A673 (cell line): ENCODE measurements at regions of chr2 and their contacts with region 1.

Region 1: DNA sequence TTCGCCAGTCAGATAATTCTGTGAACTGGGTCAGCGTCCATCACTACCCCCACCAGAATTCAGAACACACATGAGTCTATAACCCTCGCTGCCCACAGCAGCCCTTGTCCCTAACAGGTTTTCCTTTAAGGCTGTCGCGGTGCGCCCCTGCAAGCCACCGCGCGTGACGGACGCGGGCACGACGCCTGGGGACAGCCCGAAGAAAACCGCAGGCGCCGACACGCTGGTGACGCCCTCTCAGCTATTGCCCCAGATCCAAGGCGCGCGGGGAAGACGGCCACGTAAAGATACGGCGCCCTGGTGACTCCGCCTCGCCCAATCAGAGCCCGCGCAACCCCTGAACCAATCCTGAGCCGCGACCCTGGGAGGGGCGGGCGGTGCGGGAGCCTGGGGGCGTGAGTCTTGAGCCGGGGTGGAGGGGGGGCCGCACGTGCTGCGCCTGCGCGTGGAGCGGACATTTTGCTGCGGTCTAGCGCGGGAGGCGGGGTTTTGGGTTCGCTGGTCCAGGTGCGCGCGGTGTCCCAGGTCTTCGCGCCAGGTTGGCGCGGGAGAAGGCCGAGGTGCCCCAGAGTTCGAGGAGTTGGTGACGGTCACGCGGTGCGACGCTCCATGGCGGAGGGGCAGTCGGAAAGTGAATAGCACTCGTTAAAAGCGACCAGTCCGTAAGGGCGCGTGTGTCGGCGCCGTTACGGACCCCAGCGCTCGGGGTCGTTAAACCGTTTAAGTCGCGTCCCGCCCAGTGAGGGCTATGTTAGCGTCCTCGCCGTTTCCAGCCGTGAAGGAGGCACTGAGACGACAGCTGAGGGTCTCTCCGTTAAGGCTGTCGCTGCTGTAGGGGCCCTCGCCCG is 15.9 kb downstream of the NMUR1 start:
- DNase-seq: peak; percentile 99
- H3K4me3 ChIP-seq: peak overlapping the region; percentile 62
- H3K27ac ChIP-seq: peak overlapping the region; percentile 88
- H3K4me1 ChIP-seq: peaks cover 13% of the 10 kb centered on the region
- H3K27me3 ChIP-seq: no peaks in the 10 kb centered on the region
- CTCF ChIP-seq: no peak

Region 2: GRCh38 chr2:231290321-231291015 is 223.9 kb before region 1 on chr2:
- CTCF ChIA-PET with region 1: no interaction called
- POLR2A ChIA-PET with region 1: no interaction called
- intact Hi-C with region 1: no loop called
- DNase-seq: no peak
- H3K4me3 ChIP-seq: no peak overlapping the region
- H3K27ac ChIP-seq: no peak overlapping the region
- H3K4me1 ChIP-seq: no peaks in the 10 kb centered on the region
- H3K27me3 ChIP-seq: no peaks in the 10 kb centered on the region
- CTCF ChIP-seq: no peak

Region 3: DNA sequence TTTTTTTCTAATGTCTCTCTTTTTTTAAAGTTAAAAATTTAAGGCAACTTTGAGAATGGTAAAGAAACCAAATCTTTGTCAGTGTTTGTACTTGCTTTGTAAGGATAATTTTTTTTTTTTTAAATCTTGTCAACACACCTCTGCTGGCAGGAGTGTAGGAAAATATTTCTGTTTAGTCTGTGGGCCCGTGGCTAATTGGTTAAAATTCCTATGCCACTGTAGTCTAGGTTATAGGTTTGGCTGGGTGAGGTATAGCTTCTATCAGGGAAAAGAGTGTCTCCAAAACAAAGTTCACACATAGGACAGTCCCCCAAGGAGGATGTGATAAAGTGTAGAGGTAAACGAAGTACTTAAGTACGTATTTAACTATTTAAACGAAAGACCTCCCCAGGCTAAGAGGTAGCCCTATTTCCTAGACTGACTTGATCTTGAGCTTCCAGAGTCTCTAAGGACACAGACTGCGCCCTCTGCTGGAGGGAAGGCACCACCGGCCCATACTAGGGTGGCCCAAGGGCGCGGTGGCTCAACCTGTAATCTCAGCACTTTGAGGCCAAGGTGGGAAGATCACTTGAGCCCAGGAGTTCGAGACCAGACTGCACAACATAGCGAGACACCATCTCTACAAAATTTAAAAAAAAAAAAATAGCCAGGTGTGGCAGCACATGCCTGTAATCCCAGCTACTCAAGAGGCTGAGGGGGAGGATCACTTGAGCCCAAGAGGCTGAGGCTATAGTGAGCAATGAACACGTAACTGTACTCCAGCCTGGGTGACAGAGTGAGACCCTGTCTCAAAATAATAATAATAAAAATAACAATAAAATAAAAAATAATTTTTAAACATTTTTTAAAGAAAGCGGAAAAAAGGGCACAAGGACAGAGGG is 87.3 kb after region 1 on chr2:
- CTCF ChIA-PET with region 1: interaction called, 19 read pairs
- POLR2A ChIA-PET with region 1: no interaction called
- intact Hi-C with region 1: loop called (anchors 2 kb)
- DNase-seq: peak; percentile 81
- H3K4me3 ChIP-seq: no peak overlapping the region
- H3K27ac ChIP-seq: no peak overlapping the region
- H3K4me1 ChIP-seq: peaks cover 12% of the 10 kb centered on the region
- H3K27me3 ChIP-seq: no peaks in the 10 kb centered on the region
- CTCF ChIP-seq: peak; percentile 86